Calu3 (cell line): ENCODE measurements at regions of chr11 and their contacts with region 1.

Region 1: GRCh38 chr11:66119348-66120133 is 49.5 kb downstream of the PACS1 start:
- DNase-seq: peak; percentile 35
- H3K4me3 Mint-ChIP-seq: no peak overlapping the region
- H3K27ac Mint-ChIP-seq: no peak overlapping the region
- H3K4me1 Mint-ChIP-seq: peaks cover 19% of the 10 kb centered on the region
- H3K27me3 Mint-ChIP-seq: no peaks in the 10 kb centered on the region
- CTCF ChIP-seq: no peak

Region 2: GRCh38 chr11:65471410-65471762 is 648.2 kb before region 1 on chr11:
- CTCF ChIA-PET with region 1: no interaction called
- intact Hi-C with region 1: no loop called
- DNase-seq: peak; percentile 76
- H3K4me3 Mint-ChIP-seq: no peak overlapping the region
- H3K27ac Mint-ChIP-seq: peak overlapping the region; percentile 99
- H3K4me1 Mint-ChIP-seq: peaks cover 40% of the 10 kb centered on the region
- H3K27me3 Mint-ChIP-seq: no peaks in the 10 kb centered on the region
- CTCF ChIP-seq: no peak

Region 3: GRCh38 chr11:65498977-65499716 is 620.4 kb before region 1 on chr11 and contains the start of gene MALAT1:
- CTCF ChIA-PET with region 1: no interaction called
- intact Hi-C with region 1: no loop called
- DNase-seq: peak; percentile 93
- H3K4me3 Mint-ChIP-seq: no peak within 1 kb of the TSS
- H3K27ac Mint-ChIP-seq: no peak within 1 kb of the TSS
- H3K4me1 Mint-ChIP-seq: peaks cover 20% of the 10 kb centered on the region
- H3K27me3 Mint-ChIP-seq: no peaks in the 10 kb centered on the region
- CTCF ChIP-seq: no peak
- total RNA-seq, gene MALAT1: 8,437 and 9,950 TPM in 2 replicates

Region 4: DNA sequence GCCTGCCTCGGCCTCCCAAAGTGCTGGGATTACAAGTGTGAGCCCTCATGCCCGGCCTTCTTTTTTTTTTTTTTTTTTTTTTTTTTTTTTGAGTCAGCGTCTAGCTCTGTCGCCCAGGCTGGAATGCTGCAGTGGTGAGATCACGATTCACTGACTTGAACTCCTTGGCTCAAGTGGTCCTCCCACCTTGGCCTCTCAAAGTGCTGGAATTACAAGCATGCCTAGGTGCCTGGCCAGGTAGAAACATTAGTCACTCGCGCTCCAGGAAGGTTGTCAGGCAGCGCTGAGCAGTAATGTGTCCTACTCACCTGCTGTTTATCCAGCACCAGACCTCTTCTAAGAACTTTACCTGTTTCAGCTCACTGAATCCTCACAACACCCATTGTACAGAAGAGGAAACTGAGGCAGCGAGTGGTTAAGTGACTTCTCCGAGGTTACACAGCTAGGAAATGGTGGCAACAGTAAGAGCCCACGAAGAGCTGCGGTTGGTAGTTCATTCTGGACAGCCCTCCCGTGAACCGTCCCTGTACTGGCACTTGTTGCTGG is 108.2 kb before region 1 on chr11:
- CTCF ChIA-PET with region 1: interaction called, 10 read pairs
- intact Hi-C with region 1: no loop called
- DNase-seq: peak; percentile 87
- H3K4me3 Mint-ChIP-seq: peak overlapping the region; percentile 57
- H3K27ac Mint-ChIP-seq: peak overlapping the region; percentile 63
- H3K4me1 Mint-ChIP-seq: peaks cover 29% of the 10 kb centered on the region
- H3K27me3 Mint-ChIP-seq: no peaks in the 10 kb centered on the region
- CTCF ChIP-seq: no peak

Region 5: GRCh38 chr11:66068154-66068821 is 51.3 kb before region 1 on chr11:
- CTCF ChIA-PET with region 1: interaction called, 4 read pairs
- intact Hi-C with region 1: loop called (anchors 1 kb)
- DNase-seq: peak; percentile 84
- H3K4me3 Mint-ChIP-seq: no peak overlapping the region
- H3K27ac Mint-ChIP-seq: no peak overlapping the region
- H3K4me1 Mint-ChIP-seq: peaks cover 46% of the 10 kb centered on the region
- H3K27me3 Mint-ChIP-seq: no peaks in the 10 kb centered on the region
- CTCF ChIP-seq: peak; percentile 83

Region 6: DNA sequence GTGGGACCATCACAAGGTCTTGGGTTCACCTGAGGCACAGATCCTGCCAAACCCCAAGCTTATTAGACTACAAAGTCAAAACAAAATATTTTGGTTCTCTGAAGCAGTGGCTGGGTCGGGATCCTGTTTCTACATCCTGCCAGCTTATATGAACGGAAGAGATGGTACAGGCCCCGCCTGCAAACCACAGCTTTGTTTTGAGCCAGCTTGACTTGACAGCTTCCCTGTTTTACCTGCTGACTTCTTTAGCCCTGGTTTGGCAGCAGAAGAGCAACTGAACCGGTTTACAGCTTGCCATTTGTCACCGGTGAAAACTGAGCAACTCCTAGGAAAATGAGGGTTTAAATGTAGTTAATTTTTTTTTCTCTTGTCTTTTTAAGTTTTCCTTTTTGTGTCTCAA is 38.0 kb before region 1 on chr11:
- CTCF ChIA-PET with region 1: interaction called, 6 read pairs
- intact Hi-C with region 1: loop called (anchors 5 kb)
- DNase-seq: peak; percentile 64
- H3K4me3 Mint-ChIP-seq: no peak overlapping the region
- H3K27ac Mint-ChIP-seq: no peak overlapping the region
- H3K4me1 Mint-ChIP-seq: peaks cover 47% of the 10 kb centered on the region
- H3K27me3 Mint-ChIP-seq: no peaks in the 10 kb centered on the region
- CTCF ChIP-seq: no peak